Psoas muscle (tissue), 8 donors: ENCODE measurements at regions of chr3 and their contacts with region 1.

Region 1: GRCh38 chr3:179562591-179563270 is at the start of gene ACTL6A:
- DNase-seq: peak; percentile 100
- ATAC-seq: peak; percentile 98 to 99 (median 99)
- H3K4me3 ChIP-seq: peak within 1 kb of the TSS; percentile 97
- H3K27ac ChIP-seq: peak within 1 kb of the TSS; percentile 88
- H3K4me1 ChIP-seq: peaks cover 11% of the 10 kb centered on the region
- H3K27me3 ChIP-seq: no peaks in the 10 kb centered on the region
- CTCF ChIP-seq: no peak
- total RNA-seq, gene ACTL6A: 10.2 to 12.6 (median 11.0) TPM

Region 2: GRCh38 chr3:179015551-179016020 is 547.1 kb before region 1 on chr3:
- intact Hi-C with region 1: loop called in 1 of 2 experiments (anchors 10 kb)
- DNase-seq: no peak
- ATAC-seq: peak; percentile 61 to 87 (median 80)
- H3K4me3 ChIP-seq: no peak overlapping the region
- H3K27ac ChIP-seq: no peak overlapping the region
- H3K4me1 ChIP-seq: no peaks in the 10 kb centered on the region
- H3K27me3 ChIP-seq: no peaks in the 10 kb centered on the region
- CTCF ChIP-seq: peak; percentile 87

Region 3: GRCh38 chr3:179322286-179323196 is 240.2 kb before region 1 on chr3 and contains the start of gene ZNF639:
- intact Hi-C with region 1: loop called in 1 of 2 experiments (anchors 5 kb)
- DNase-seq: peak; percentile 90 to 92
- ATAC-seq: peak; percentile 91 to 96 (median 94)
- H3K4me3 ChIP-seq: peak within 1 kb of the TSS; percentile 99
- H3K27ac ChIP-seq: peak within 1 kb of the TSS; percentile 94
- H3K4me1 ChIP-seq: peaks cover 13% of the 10 kb centered on the region
- H3K27me3 ChIP-seq: no peaks in the 10 kb centered on the region
- CTCF ChIP-seq: peak; percentile 87
- total RNA-seq, gene ZNF639: 22.9 to 30.7 (median 27.9) TPM

Region 4: DNA sequence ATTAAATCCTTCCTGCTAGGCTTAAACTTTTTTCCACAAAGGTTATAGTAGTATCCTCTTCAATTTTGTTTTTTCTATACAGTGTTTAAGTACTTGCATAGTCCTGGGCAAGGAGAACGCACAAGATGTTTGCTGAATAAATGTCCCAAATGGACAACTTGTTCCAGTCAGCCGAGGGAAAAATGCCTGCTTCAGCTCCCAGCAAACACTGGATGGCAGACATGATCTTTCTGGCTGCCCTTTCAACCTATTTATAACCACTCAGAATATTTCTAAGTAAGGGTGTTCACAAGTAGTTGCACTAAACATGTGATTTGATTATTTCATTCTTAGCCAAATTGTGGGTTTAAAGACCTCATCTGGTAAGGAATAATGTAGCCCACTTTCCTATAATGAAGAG is 141.2 kb before region 1 on chr3:
- intact Hi-C with region 1: loop called (anchors 5 to 10 kb)
- DNase-seq: no peak
- ATAC-seq: peak in 1 of 4 donors; percentile 67
- H3K4me3 ChIP-seq: no peak overlapping the region
- H3K27ac ChIP-seq: no peak overlapping the region
- H3K4me1 ChIP-seq: no peaks in the 10 kb centered on the region
- H3K27me3 ChIP-seq: no peaks in the 10 kb centered on the region
- CTCF ChIP-seq: peak; percentile 38

Region 5: DNA sequence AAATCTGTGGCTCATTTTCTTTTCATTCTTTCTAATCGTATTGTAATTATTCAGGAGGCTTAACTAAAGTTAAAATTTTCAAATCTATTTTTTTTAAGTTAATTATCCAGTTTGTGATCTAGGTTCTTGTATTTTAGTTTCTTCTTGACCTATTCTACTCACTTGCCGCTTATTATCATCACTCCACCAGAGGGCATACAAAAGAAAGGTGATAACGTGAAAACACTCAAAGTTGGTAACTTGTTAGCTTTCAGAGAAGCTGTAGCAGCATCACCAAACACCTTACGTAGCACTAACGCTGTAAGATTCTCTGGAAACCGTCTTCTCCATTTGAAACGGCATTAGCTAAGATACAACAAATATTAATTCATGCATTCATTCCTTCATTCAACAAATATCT is 116.2 kb before region 1 on chr3:
- intact Hi-C with region 1: loop called in 1 of 2 experiments (anchors 5 kb)
- DNase-seq: no peak
- ATAC-seq: no peak
- H3K4me3 ChIP-seq: no peak overlapping the region
- H3K27ac ChIP-seq: no peak overlapping the region
- H3K4me1 ChIP-seq: peaks cover 3% of the 10 kb centered on the region
- H3K27me3 ChIP-seq: peaks cover 0 to 30% (median 0%) of the 10 kb centered on the region in 3 donors
- CTCF ChIP-seq: peak; percentile 13

Region 6: DNA sequence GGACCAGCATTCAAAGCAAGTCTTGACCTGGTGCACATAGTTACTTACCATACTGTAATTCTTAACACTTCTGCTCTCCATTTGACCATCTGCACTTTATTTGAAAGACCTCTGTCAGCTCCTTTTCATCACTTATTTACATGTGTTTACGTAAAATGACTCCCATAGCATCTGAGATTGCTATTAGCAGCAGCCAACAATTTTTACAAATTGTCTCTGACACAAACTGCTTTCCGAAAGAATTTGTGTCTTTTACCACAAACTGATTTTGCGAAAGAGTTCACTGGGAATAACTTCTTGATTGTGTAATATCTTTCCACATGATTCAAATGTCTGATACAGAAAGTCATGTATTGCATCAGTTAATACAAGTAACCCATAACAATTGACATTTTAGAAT is 618.1 kb after region 1 on chr3:
- intact Hi-C with region 1: no loop called
- DNase-seq: no peak
- ATAC-seq: no peak
- H3K4me3 ChIP-seq: no peak overlapping the region
- H3K27ac ChIP-seq: no peak overlapping the region
- H3K4me1 ChIP-seq: no peaks in the 10 kb centered on the region
- H3K27me3 ChIP-seq: no peaks in the 10 kb centered on the region
- CTCF ChIP-seq: no peak